ENCODE measurements at regions of chr10 and their contacts with region 1.

Region 1: DNA sequence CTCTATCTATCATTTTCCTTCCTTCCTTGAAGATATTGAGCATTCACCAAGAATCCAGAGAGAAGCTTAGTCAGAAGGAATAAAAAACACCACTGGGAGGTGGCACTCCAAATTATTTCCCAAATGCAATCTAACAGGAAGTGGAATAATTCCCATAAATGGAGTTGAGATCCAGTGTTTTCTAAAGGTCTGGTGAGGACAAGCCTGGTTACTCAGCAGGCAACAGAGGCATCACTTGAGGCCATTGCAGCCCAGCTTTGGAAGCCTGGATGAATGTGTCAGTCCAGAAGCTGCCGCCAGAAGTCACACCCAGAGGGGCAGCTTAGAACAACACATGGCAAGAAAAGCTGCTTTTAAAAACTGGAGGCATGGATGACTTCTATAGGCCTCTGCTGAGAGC is 288.9 kb upstream of the KLF6 start:
- DNase-seq: peak in 1 of 5 donors; percentile 61
- ATAC-seq: peak; percentile 43 to 73 (median 60)
- H3K4me3 ChIP-seq: no peak overlapping the region
- H3K27ac ChIP-seq: peak overlapping the region in 8 of 12 donors; percentile 9 to 56 (median 50)
- H3K4me1 ChIP-seq: peaks cover 0 to 42% (median 24%) of the 10 kb centered on the region in 12 donors
- H3K27me3 ChIP-seq: no peaks in the 10 kb centered on the region
- CTCF ChIP-seq: no peak
- POLR2A ChIP-seq: no peak

Region 2: GRCh38 chr10:3791974-3792633 is 281.8 kb before region 1 on chr10:
- intact Hi-C with region 1: loop called in 1 of 10 experiments (anchors 10 kb)
- DNase-seq: no peak
- ATAC-seq: no peak
- H3K4me3 ChIP-seq: no peak overlapping the region
- H3K27ac ChIP-seq: no peak overlapping the region
- H3K4me1 ChIP-seq: peaks cover 0 to 5% (median 0%) of the 10 kb centered on the region in 12 donors
- H3K27me3 ChIP-seq: no peaks in the 10 kb centered on the region
- CTCF ChIP-seq: no peak
- POLR2A ChIP-seq: no peak

Region 3: DNA sequence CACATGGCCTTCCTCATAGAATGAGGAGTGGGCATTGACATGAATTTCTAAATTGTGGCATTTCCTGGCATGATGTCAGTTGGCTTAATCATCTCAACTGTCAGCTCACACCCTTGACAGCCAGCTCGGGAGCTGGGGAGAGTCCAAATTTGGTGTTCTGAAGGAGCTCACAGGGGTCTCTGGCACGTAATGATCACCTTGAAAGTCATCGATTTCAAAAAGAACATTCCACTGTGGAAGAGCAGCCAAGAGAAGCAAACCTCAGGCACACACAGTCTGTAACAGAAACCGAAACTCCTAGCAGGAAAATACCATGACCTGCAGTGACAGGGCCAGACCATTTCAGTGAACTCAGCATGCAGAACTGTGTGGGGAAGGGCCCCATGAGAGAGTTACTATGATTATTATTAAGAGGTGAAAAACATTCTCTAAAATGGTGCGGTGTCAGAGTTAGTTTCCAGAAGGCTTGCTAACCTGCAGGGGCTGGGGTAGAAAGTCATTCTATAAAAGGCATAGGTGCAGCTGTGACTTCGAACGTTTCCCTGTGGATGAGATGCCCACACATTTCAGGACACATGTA is 262.5 kb before region 1 on chr10:
- intact Hi-C with region 1: loop called in 1 of 10 experiments (anchors 10 kb)
- DNase-seq: peak in 1 of 5 donors; percentile 72
- ATAC-seq: peak; percentile 37 to 69 (median 56)
- H3K4me3 ChIP-seq: peak overlapping the region in 5 of 12 donors; percentile 3 to 24 (median 15)
- H3K27ac ChIP-seq: peak overlapping the region; percentile 74 to 96 (median 88)
- H3K4me1 ChIP-seq: peaks cover 0 to 61% (median 56%) of the 10 kb centered on the region in 12 donors
- H3K27me3 ChIP-seq: no peaks in the 10 kb centered on the region
- CTCF ChIP-seq: no peak
- POLR2A ChIP-seq: no peak

Measured in heart left ventricle (tissue), 16 donors.